CD14-positive monocyte (primary cell): ENCODE measurements at regions of chr1 and their contacts with region 1.

Region 1: GRCh38 chr1:6199298-6200187 is at the start of gene RPL22:
- DNase-seq: peak; percentile 92 to 97 (median 97)
- H3K4me3 ChIP-seq: peak within 1 kb of the TSS; percentile 76 to 97 (median 95)
- H3K4me3 Mint-ChIP-seq: peak within 1 kb of the TSS; percentile 83 to 88
- H3K27ac ChIP-seq: peak within 1 kb of the TSS; percentile 53 to 80
- H3K27ac Mint-ChIP-seq: peak within 1 kb of the TSS; percentile 19 to 91 (median 77)
- H3K4me1 ChIP-seq: peaks cover 20 to 30% of the 10 kb centered on the region in 2 donors
- H3K4me1 Mint-ChIP-seq: peaks cover 29% of the 10 kb centered on the region
- H3K27me3 ChIP-seq: no peaks in the 10 kb centered on the region
- H3K27me3 Mint-ChIP-seq: peaks cover 10 to 20% (median 16%) of the 10 kb centered on the region in 3 donors
- CTCF ChIP-seq: no peak
- polyA plus RNA-seq, gene RPL22: 62.6 to 97.2 (median 65.6) TPM

Region 2: DNA sequence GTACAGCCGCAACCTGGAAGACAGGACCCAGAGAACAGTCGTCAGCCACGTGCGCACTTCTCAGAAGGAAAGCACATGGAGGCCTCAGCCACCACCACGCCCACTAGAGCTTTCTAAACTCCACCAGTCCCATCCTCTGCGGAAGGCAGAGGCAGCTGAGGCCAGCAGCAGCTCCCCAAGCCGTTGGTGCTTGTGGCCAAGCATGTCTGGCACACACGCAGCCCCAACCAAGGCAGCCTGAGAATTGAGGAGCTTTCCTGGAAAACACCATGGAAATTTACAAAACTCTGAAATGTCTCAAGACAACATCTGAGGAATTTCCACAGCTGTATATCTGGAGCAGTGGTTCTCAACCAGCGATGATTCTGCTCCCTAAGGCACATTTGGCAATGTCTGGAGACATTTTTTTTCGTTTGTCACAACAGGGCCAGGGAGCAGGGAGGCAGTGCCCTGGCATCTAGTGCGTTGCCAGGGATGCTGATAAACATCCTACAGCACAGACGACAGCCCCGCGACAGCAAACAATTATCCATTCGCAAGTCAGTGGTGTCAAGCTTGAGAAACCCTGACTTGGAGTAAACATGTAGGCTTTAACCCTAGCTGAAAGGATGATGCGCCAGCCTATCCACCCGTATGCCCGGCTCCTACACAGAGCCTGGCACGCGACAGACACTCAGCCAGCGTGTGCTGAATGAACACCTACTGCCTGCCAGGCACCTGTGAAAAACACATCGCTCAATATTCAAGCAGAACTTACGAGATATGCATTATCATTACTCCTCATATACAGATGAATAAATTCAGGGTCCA is 232.0 kb before region 1 on chr1:
- intact Hi-C with region 1: no loop called
- DNase-seq: no peak
- H3K4me3 ChIP-seq: no peak overlapping the region
- H3K4me3 Mint-ChIP-seq: no peak overlapping the region
- H3K27ac ChIP-seq: no peak overlapping the region
- H3K27ac Mint-ChIP-seq: peak overlapping the region in 1 of 7 donors; percentile 52
- H3K4me1 ChIP-seq: no peaks in the 10 kb centered on the region
- H3K4me1 Mint-ChIP-seq: no peaks in the 10 kb centered on the region
- H3K27me3 ChIP-seq: no peaks in the 10 kb centered on the region
- H3K27me3 Mint-ChIP-seq: no peaks in the 10 kb centered on the region
- CTCF ChIP-seq: no peak

Region 3: GRCh38 chr1:5992026-5992813 is 207.3 kb before region 1 on chr1 and contains the start of gene NPHP4:
- intact Hi-C with region 1: loop called in 1 of 2 experiments (anchors 5 kb)
- DNase-seq: peak; percentile 98 to 99 (median 99)
- H3K4me3 ChIP-seq: peak within 1 kb of the TSS; percentile 54 to 83 (median 57)
- H3K4me3 Mint-ChIP-seq: peak within 1 kb of the TSS; percentile 85 to 92
- H3K27ac ChIP-seq: peak within 1 kb of the TSS; percentile 58 to 92
- H3K27ac Mint-ChIP-seq: peak within 1 kb of the TSS; percentile 62 to 93 (median 90)
- H3K4me1 ChIP-seq: peaks cover 32 to 37% of the 10 kb centered on the region in 2 donors
- H3K4me1 Mint-ChIP-seq: peaks cover 34% of the 10 kb centered on the region
- H3K27me3 ChIP-seq: no peaks in the 10 kb centered on the region
- H3K27me3 Mint-ChIP-seq: peaks cover 0 to 1% (median 1%) of the 10 kb centered on the region in 3 donors
- CTCF ChIP-seq: no peak
- polyA plus RNA-seq, gene NPHP4: 0.39 to 13.7 (median 1.2) TPM

Region 4: DNA sequence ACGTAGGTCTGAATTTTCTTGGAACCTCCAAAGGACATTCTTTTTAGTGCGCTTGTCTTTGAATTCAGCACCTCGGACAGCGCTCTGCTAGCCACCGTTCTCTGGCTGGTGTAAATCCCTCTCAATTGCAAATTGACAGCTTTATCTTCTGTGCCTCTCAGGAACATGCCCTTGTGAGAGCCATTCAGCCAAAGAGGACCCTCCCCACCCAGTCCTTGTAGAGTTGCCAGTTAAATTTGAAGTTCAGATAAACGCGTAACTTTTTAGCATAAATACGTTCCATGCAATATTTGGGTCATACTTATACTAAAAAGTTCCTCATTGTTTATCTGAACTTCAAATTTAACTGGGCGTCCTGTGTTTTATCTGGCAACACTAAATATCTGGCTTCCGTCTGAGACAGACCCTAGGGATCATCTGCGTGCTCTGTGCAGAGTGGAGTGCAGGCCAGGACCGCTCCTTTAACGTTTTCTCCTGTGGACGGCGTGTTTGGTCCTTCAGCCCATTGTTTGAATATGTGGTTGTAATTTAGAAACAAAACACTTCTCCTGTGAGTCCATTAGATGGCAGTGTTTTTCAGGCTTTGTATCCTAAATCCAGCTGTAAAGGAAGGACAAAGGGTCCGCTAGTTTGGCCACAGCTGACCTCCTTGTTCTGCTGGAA is 146.9 kb before region 1 on chr1:
- intact Hi-C with region 1: loop called in 1 of 2 experiments (anchors 10 kb)
- DNase-seq: peak in 1 of 3 donors; percentile 15
- H3K4me3 ChIP-seq: no peak overlapping the region
- H3K4me3 Mint-ChIP-seq: no peak overlapping the region
- H3K27ac ChIP-seq: no peak overlapping the region
- H3K27ac Mint-ChIP-seq: peak overlapping the region in 3 of 7 donors; percentile 57 to 67 (median 58)
- H3K4me1 ChIP-seq: peaks cover 33 to 36% of the 10 kb centered on the region in 2 donors
- H3K4me1 Mint-ChIP-seq: peaks cover 42% of the 10 kb centered on the region
- H3K27me3 ChIP-seq: no peaks in the 10 kb centered on the region
- H3K27me3 Mint-ChIP-seq: peaks cover 0 to 1% (median 0%) of the 10 kb centered on the region in 3 donors
- CTCF ChIP-seq: peak; percentile 56

Region 5: GRCh38 chr1:6235296-6235677 is 35.7 kb after region 1 on chr1:
- intact Hi-C with region 1: loop called (anchors 2 kb)
- DNase-seq: no peak
- H3K4me3 ChIP-seq: peak overlapping the region; percentile 57 to 81 (median 64)
- H3K4me3 Mint-ChIP-seq: peak overlapping the region; percentile 85 to 92
- H3K27ac ChIP-seq: no peak overlapping the region
- H3K27ac Mint-ChIP-seq: peak overlapping the region in 1 of 7 donors; percentile 40
- H3K4me1 ChIP-seq: peaks cover 13% of the 10 kb centered on the region in 2 donors
- H3K4me1 Mint-ChIP-seq: peaks cover 12% of the 10 kb centered on the region
- H3K27me3 ChIP-seq: peaks cover 12 to 19% of the 10 kb centered on the region in 2 donors
- H3K27me3 Mint-ChIP-seq: peaks cover 27 to 31% (median 29%) of the 10 kb centered on the region in 3 donors
- CTCF ChIP-seq: no peak